SK-N-SH (cell line): ENCODE measurements at regions of chr17 and their contacts with region 1.

Region 1: GRCh38 chr17:4789901-4790704 is 1.3 kb downstream of the GLTPD2 start:
- DNase-seq: peak; percentile 98
- H3K4me3 ChIP-seq: peak overlapping the region; percentile 59 to 79
- H3K27ac ChIP-seq: peak overlapping the region; percentile 70 to 82
- H3K4me1 ChIP-seq: peaks cover 8 to 19% of the 10 kb centered on the region in 2 experiments; a peak in 2 of 4 replicates
- H3K27me3 ChIP-seq: no peaks in the 10 kb centered on the region
- CTCF ChIP-seq: peak; percentile 58
- EP300 ChIP-seq: no peak
- RAD21 ChIP-seq: peak; percentile 39

Region 2: GRCh38 chr17:4771519-4772234 is 18.4 kb before region 1 on chr17 and contains the start of gene TM4SF5:
- CTCF ChIA-PET with region 1: interaction called, 21 read pairs
- POLR2A ChIA-PET with region 1: interaction called, 3 read pairs
- DNase-seq: peak; percentile 37
- H3K4me3 ChIP-seq: no peak within 1 kb of the TSS
- H3K27ac ChIP-seq: no peak within 1 kb of the TSS
- H3K4me1 ChIP-seq: peaks cover 0 to 10% of the 10 kb centered on the region in 2 experiments; a peak in 1 of 4 replicates
- H3K27me3 ChIP-seq: peaks cover 41% of the 10 kb centered on the region
- CTCF ChIP-seq: no peak
- EP300 ChIP-seq: no peak
- RAD21 ChIP-seq: no peak
- polyA plus RNA-seq, gene TM4SF5: not detected in 2 replicates

Region 3: DNA sequence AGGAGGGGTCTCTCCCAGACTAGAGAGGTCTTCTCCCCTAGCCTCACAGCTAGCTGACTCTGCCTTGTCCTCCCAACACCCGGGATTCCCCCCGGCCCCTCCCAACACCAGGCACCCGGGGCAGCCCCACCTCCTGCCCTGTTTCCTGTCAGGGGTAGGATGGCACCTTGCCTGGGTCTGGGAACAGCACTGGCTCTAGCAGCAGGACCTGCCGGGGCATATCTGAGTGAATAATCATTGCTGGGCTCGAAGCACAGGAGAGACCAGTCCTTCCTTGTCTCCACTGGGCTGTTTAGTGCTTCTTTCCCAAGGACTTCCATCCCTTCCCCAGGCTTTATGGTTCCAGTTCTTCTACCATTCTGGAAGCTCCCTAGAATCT is 68.8 kb after region 1 on chr17:
- CTCF ChIA-PET with region 1: interaction called, 11 read pairs
- POLR2A ChIA-PET with region 1: interaction called, 4 read pairs
- DNase-seq: peak; percentile 83
- H3K4me3 ChIP-seq: peak overlapping the region in 1 of 2 experiments; percentile 39; a peak in 1 of 4 replicates
- H3K27ac ChIP-seq: peak overlapping the region; percentile 57 to 88
- H3K4me1 ChIP-seq: peaks cover 27 to 42% of the 10 kb centered on the region in 2 experiments
- H3K27me3 ChIP-seq: no peaks in the 10 kb centered on the region
- CTCF ChIP-seq: no peak
- EP300 ChIP-seq: no peak
- RAD21 ChIP-seq: peak; percentile 15; the same call in 1 of the 2 replicates

Region 4: DNA sequence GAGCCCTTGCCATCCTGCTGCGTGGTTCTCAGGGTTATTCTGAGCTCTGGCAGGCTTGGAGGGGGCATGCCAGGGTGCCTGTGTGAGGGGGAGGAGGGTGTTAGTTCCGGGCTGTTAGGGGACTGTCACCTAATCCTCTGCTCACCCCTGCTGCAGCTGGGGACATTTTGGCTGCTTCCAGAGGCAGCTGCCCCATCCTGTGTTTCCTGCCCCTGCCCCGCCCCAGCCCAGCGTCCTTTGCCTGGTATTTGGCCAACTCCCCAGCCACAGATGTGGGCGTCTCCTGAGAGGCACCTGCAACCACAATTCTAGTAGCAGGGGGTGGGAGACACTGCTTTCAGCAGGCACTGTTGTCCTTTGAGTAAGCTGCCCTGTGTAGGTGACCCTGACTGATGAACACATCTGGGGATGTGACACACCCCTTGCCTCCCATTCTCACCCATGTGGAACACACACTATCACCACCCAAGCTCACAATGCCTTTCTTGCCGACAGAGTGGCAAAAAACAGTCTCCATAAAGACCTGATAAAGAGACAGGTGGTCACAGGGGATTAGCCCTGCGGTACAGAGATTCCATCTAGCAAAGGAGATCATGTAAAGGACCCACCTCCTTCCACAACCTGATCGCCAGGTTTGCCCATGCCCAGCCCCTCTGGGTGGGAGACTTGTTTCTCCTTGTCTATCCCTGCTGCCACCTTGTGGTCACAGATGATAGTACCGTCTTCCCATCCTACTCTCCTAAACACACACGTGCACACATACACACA is 113.1 kb after region 1 on chr17 and contains the start of gene CHRNE:
- CTCF ChIA-PET with region 1: interaction called, 47 read pairs
- POLR2A ChIA-PET with region 1: no interaction called
- DNase-seq: peak; percentile 78
- H3K4me3 ChIP-seq: peak within 1 kb of the TSS in 1 of 2 experiments; percentile 9; a peak in 1 of 4 replicates
- H3K27ac ChIP-seq: no peak within 1 kb of the TSS
- H3K4me1 ChIP-seq: peaks cover 0 to 12% of the 10 kb centered on the region in 2 experiments; a peak in 1 of 4 replicates
- H3K27me3 ChIP-seq: no peaks in the 10 kb centered on the region
- CTCF ChIP-seq: peak; percentile 82
- EP300 ChIP-seq: no peak
- RAD21 ChIP-seq: peak; percentile 64
- polyA plus RNA-seq, gene CHRNE: 0.54 and 0.71 TPM in 2 replicates